ENCODE measurements at regions of chr13 and their contacts with region 1.

Region 1: DNA sequence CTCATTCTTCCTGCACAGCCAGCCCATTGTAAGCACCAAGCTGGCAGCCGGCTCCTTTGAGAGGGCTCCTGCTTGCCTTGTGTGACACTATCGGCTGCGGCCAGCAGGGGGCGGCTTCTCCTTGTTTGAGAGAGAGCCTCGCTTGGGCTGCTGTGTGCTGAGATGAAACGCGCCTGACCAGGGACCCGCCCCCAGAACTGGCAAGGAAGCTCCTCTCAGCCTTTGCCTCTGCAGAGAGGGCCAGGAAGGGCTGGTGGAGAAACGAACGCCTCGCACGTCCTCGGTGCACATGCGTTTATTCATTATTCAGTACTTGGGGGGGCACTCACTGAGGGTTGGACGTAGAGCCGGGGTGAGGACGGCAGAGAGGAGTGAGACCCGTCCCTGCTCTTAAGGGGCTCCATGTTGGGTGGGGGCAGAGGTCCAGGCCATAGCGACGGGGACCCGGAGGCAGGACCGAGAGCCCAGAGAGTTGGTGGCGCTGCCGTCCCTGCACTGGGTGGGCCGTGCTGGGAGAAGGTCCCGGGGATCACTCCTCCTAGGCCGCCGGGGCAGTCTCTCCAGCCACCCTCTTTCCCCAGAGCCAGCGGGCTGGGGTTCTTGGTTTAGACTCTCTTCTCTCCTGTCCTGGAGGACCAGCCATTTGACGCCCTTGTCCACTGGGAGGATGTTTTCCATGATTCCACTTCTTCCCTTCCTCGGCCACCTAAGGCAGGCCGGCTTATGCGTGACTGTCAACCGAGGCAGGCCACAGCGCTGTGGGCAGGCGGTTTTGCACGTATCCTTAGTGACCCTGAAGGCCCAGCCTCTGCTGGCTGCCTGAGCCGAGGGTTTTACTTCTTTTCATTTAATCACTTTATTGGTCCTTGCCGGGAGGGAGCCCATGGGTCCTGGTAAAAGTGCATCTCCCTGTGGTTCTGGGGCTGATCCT is 174.5 kb downstream of the KATNAL1 start:
- DNase-seq: peak; percentile 87 to 97 (median 93)
- H3K4me3 ChIP-seq: peak overlapping the region; percentile 11
- H3K4me3 Mint-ChIP-seq: peak overlapping the region in 6 of 7 donors; percentile 29 to 76 (median 60)
- H3K27ac ChIP-seq: no peak overlapping the region
- H3K27ac Mint-ChIP-seq: peak overlapping the region in 6 of 8 donors; percentile 10 to 96 (median 68)
- H3K4me1 ChIP-seq: peaks cover 15% of the 10 kb centered on the region
- H3K4me1 Mint-ChIP-seq: peaks cover 23 to 30% (median 30%) of the 10 kb centered on the region in 3 donors
- H3K27me3 ChIP-seq: no peaks in the 10 kb centered on the region
- H3K27me3 Mint-ChIP-seq: peaks cover 0 to 2% of the 10 kb centered on the region in 2 donors

Region 2: DNA sequence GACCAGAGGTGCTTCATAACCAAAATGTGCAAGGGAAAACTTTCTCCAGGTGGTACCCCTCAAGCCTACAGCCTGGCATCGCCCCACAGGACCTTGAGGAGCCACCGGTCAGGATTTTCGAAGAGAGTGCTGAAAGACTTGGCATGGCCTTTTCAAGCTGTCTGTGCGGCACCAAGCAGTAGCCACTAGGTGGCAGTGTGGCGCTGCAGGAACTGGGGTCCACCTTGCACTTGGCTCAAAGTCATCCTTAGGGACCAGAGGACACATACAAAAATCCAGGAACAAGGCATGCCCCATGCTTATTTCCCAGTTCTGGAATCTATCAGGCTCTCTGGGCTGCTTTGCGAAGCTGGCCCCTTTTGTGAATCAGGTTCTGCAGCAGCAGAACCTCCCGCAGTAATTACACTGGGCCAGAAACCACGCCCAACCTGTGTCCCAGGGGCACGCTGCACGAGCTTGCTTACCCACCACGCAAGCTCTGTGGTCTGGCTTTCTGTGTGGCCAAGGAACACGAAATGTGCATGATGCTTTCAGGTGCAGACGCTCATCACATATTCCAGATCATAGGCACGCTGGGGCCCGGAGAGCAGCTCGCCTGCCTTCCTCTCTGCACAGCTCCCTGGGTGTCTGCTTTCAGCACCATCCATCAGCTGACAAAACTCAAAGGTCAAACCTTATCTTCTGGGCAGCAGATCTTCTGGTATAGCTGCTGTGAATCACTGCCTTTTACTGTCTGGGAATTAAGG is 624.6 kb before region 1 on chr13:
- CTCF ChIA-PET with region 1: interaction called, 11 read pairs
- POLR2A ChIA-PET with region 1: no interaction called
- DNase-seq: peak; percentile 51 to 81 (median 61)
- H3K4me3 ChIP-seq: no peak overlapping the region
- H3K4me3 Mint-ChIP-seq: no peak overlapping the region
- H3K27ac ChIP-seq: no peak overlapping the region
- H3K27ac Mint-ChIP-seq: peak overlapping the region in 1 of 8 donors; percentile 19
- H3K4me1 ChIP-seq: no peaks in the 10 kb centered on the region
- H3K4me1 Mint-ChIP-seq: no peaks in the 10 kb centered on the region
- H3K27me3 ChIP-seq: no peaks in the 10 kb centered on the region
- H3K27me3 Mint-ChIP-seq: peaks cover 6 to 21% of the 10 kb centered on the region in 2 donors

Region 3: DNA sequence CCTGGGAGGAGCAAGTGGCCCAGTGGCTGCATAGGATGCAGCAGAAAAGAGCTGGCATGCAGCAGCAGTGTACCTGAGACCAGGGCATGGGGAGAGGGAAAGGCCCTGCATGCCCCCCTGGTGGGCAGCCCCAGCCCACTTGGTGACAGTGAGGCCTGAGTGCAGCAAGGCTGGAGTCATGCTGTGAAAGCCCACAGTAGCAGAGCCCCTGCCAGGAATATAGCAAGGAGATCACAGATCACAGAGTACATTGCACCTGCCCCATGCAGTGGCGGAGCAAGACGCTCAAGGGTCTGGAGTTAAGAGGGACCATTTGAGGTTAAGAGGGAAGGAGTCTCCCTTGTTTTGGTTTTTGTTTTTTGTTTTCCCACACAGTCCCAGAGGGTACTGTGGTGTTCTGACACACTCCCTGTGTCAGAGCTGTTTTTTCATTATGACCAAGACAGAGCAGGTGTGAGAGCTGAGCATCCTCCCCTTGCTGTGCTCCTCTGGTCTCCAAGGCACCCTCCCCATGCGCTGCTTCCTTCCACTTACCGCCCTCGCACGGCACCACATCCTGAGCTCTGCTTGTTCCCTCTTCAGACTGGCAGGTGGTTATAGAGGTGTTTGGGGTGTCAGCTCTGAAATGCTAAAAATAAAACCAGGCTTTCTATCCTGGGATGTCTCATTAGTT is 197.4 kb before region 1 on chr13:
- CTCF ChIA-PET with region 1: interaction called, 13 read pairs
- POLR2A ChIA-PET with region 1: no interaction called
- DNase-seq: peak; percentile 46 to 89 (median 75)
- H3K4me3 ChIP-seq: peak overlapping the region; percentile 66
- H3K4me3 Mint-ChIP-seq: peak overlapping the region; percentile 69 to 94 (median 87)
- H3K27ac ChIP-seq: no peak overlapping the region
- H3K27ac Mint-ChIP-seq: peak overlapping the region; percentile 51 to 94 (median 86)
- H3K4me1 ChIP-seq: peaks cover 46% of the 10 kb centered on the region
- H3K4me1 Mint-ChIP-seq: peaks cover 45 to 65% (median 65%) of the 10 kb centered on the region in 3 donors
- H3K27me3 ChIP-seq: no peaks in the 10 kb centered on the region
- H3K27me3 Mint-ChIP-seq: no peaks in the 10 kb centered on the region

Region 4: GRCh38 chr13:29978211-29978610 is 154.7 kb before region 1 on chr13:
- CTCF ChIA-PET with region 1: no interaction called
- POLR2A ChIA-PET with region 1: no interaction called
- DNase-seq: no peak
- H3K4me3 ChIP-seq: no peak overlapping the region
- H3K4me3 Mint-ChIP-seq: no peak overlapping the region
- H3K27ac ChIP-seq: no peak overlapping the region
- H3K27ac Mint-ChIP-seq: no peak overlapping the region
- H3K4me1 ChIP-seq: no peaks in the 10 kb centered on the region
- H3K4me1 Mint-ChIP-seq: peaks cover 6 to 12% (median 6%) of the 10 kb centered on the region in 3 donors
- H3K27me3 ChIP-seq: no peaks in the 10 kb centered on the region
- H3K27me3 Mint-ChIP-seq: no peaks in the 10 kb centered on the region

Region 5: GRCh38 chr13:30165796-30166195 is 32.9 kb after region 1 on chr13:
- CTCF ChIA-PET with region 1: interaction called, 289 read pairs
- POLR2A ChIA-PET with region 1: no interaction called
- DNase-seq: no peak
- H3K4me3 ChIP-seq: no peak overlapping the region
- H3K4me3 Mint-ChIP-seq: no peak overlapping the region
- H3K27ac ChIP-seq: no peak overlapping the region
- H3K27ac Mint-ChIP-seq: peak overlapping the region in 1 of 8 donors; percentile 28
- H3K4me1 ChIP-seq: peaks cover 7% of the 10 kb centered on the region
- H3K4me1 Mint-ChIP-seq: peaks cover 10 to 15% (median 13%) of the 10 kb centered on the region in 3 donors
- H3K27me3 ChIP-seq: no peaks in the 10 kb centered on the region
- H3K27me3 Mint-ChIP-seq: peaks cover 0 to 2% of the 10 kb centered on the region in 2 donors

Region 6: GRCh38 chr13:30253830-30254229 is 120.9 kb after region 1 on chr13:
- CTCF ChIA-PET with region 1: interaction called, 12 read pairs
- POLR2A ChIA-PET with region 1: no interaction called
- DNase-seq: no peak
- H3K4me3 ChIP-seq: no peak overlapping the region
- H3K4me3 Mint-ChIP-seq: peak overlapping the region in 2 of 7 donors; percentile 41 to 47
- H3K27ac ChIP-seq: no peak overlapping the region
- H3K27ac Mint-ChIP-seq: peak overlapping the region in 4 of 8 donors; percentile 4 to 42 (median 28)
- H3K4me1 ChIP-seq: no peaks in the 10 kb centered on the region
- H3K4me1 Mint-ChIP-seq: peaks cover 3 to 21% (median 11%) of the 10 kb centered on the region in 3 donors
- H3K27me3 ChIP-seq: no peaks in the 10 kb centered on the region
- H3K27me3 Mint-ChIP-seq: no peaks in the 10 kb centered on the region

Region 7: GRCh38 chr13:30371649-30372265 is 238.9 kb after region 1 on chr13:
- CTCF ChIA-PET with region 1: interaction called, 16 read pairs
- POLR2A ChIA-PET with region 1: interaction called, 3 read pairs
- DNase-seq: peak in 4 of 5 donors; percentile 48 to 88 (median 84)
- H3K4me3 ChIP-seq: peak overlapping the region; percentile 19
- H3K4me3 Mint-ChIP-seq: peak overlapping the region; percentile 18 to 89 (median 86)
- H3K27ac ChIP-seq: peak overlapping the region; percentile 22
- H3K27ac Mint-ChIP-seq: peak overlapping the region; percentile 83 to 100 (median 96)
- H3K4me1 ChIP-seq: peaks cover 83% of the 10 kb centered on the region
- H3K4me1 Mint-ChIP-seq: peaks cover 77 to 93% (median 87%) of the 10 kb centered on the region in 3 donors
- H3K27me3 ChIP-seq: no peaks in the 10 kb centered on the region
- H3K27me3 Mint-ChIP-seq: peaks cover 0 to 3% of the 10 kb centered on the region in 2 donors

Region 8: DNA sequence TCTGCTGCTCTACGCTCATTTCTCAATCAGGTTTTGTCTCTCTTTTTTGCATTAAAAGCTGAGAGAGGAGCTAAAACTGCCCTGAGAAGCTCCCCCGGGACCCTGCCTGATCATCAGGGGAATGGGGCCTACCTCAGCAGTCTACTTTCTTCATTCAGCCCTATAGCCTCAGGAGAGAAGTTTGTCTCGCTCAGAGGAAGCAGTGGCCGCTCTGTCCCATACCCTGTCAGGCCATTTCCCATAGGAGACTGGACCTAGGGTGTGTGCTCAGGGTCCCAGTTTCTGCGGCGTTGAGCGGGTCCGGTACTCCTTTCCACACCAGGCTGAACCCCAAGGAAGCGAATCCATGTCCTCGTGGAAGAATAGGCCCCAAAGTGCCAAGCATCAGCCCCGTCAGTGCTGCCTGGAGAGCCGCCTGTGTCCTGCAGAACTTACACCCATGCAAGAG is 311.1 kb after region 1 on chr13:
- CTCF ChIA-PET with region 1: no interaction called
- POLR2A ChIA-PET with region 1: no interaction called
- DNase-seq: no peak
- H3K4me3 ChIP-seq: no peak overlapping the region
- H3K4me3 Mint-ChIP-seq: no peak overlapping the region
- H3K27ac ChIP-seq: no peak overlapping the region
- H3K27ac Mint-ChIP-seq: no peak overlapping the region
- H3K4me1 ChIP-seq: no peaks in the 10 kb centered on the region
- H3K4me1 Mint-ChIP-seq: peaks cover 3 to 5% (median 5%) of the 10 kb centered on the region in 3 donors
- H3K27me3 ChIP-seq: no peaks in the 10 kb centered on the region
- H3K27me3 Mint-ChIP-seq: peaks cover 4 to 6% of the 10 kb centered on the region in 2 donors

Region 9: DNA sequence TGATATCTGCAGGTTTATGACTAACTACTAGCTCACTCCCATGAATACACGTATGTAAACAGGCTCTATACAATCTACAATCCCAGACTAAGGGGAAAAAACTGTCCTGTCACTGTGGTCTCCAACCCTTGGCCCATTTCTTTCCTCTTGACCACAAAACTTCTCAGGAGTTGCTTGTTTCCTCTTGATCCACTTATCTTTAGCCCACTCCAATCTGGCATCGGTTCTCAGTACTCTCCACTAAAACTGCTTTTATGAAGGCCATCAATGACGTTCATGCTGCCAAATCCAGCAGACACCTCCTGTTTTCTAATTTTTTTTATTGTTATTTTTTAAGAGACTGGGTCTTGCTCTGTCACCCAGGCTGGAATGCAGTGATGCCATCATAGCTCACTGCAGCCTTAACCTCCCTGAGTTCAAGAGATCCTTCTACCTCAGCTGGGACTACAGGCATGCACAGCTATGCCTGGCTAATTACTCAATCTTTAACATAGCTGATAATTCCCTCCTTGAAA is 452.9 kb after region 1 on chr13:
- CTCF ChIA-PET with region 1: interaction called, 10 read pairs
- POLR2A ChIA-PET with region 1: no interaction called
- DNase-seq: no peak
- H3K4me3 ChIP-seq: no peak overlapping the region
- H3K4me3 Mint-ChIP-seq: no peak overlapping the region
- H3K27ac ChIP-seq: no peak overlapping the region
- H3K27ac Mint-ChIP-seq: no peak overlapping the region
- H3K4me1 ChIP-seq: no peaks in the 10 kb centered on the region
- H3K4me1 Mint-ChIP-seq: no peaks in the 10 kb centered on the region
- H3K27me3 ChIP-seq: no peaks in the 10 kb centered on the region
- H3K27me3 Mint-ChIP-seq: peaks cover 0 to 6% of the 10 kb centered on the region in 2 donors

Measured in CD8-positive, alpha-beta memory T cell (primary cell).